Activated CD8-positive, alpha-beta memory T cell treated with anti-CD3 and anti-CD28 coated beads, Interleukin-2, amount 10 ng/mL, durations not matched to agents 7 days and 5 days (primary cell): ENCODE measurements at regions of chr19 and their contacts with region 1.

Region 1: DNA sequence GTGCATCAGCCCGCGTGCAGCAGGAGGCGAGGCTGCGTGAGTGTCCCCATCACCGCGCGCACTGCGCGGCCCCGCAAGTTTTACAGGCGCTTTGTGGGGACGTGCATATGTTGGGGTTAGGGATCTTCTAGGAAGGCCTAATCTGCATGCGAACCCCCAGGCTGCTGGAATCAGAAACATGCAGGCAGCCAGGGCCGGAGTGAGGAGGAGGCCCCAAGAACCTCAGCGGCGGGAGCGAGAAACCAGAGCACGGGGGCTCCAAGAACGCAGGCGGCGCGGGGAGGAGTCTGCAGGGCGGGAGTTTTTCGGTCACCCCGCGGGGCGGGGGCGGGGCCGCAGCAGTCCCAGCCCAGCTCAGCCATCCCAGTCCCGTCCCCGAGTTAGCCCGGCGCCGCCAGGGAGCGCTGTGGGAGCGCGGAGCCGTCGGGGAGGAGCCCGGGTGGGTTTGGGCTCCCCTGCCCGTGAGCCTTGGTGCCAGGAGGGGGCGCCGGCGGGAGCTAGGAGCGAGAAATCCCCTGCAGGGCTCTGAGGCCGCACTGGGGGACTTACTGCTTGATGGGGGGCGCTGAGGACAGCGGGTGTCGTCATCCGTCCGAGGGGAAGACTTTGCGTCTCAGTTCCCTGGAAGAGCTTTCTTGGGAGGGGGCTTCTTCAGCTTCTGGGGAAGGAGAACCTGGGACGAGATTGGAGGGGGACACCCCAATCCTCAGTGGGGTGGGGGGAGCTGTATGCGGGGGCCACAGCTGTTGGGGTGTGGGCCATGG is 933 bp upstream of the NRTN start:
- DNase-seq: peak; percentile 94
- ATAC-seq: peak; percentile 97
- H3K4me3 Mint-ChIP-seq: peak overlapping the region; percentile 64
- H3K27ac Mint-ChIP-seq: no peak overlapping the region
- H3K4me1 Mint-ChIP-seq: peaks cover 19% of the 10 kb centered on the region
- H3K27me3 Mint-ChIP-seq: peaks cover 46% of the 10 kb centered on the region

Region 2: GRCh38 chr19:5719961-5720790 is 83.8 kb before region 1 on chr19 and contains the starts of genes CATSPERD and LONP1:
- CTCF ChIA-PET with region 1: interaction called, 20 read pairs
- DNase-seq: peak; percentile 99
- ATAC-seq: peak; percentile 88
- H3K4me3 Mint-ChIP-seq: peak within 1 kb of the TSS; percentile 92
- H3K27ac Mint-ChIP-seq: peak within 1 kb of the TSS; percentile 98
- H3K4me1 Mint-ChIP-seq: peaks cover 37% of the 10 kb centered on the region
- H3K27me3 Mint-ChIP-seq: no peaks in the 10 kb centered on the region
- total RNA-seq, gene CATSPERD: not detected
- total RNA-seq, gene LONP1: 134 to 141 TPM

Region 3: GRCh38 chr19:5827891-5828660 is 24.1 kb after region 1 on chr19:
- CTCF ChIA-PET with region 1: interaction called, 49 read pairs
- DNase-seq: peak; percentile 97
- ATAC-seq: peak; percentile 83
- H3K4me3 Mint-ChIP-seq: peak overlapping the region; percentile 94
- H3K27ac Mint-ChIP-seq: peak overlapping the region; percentile 97
- H3K4me1 Mint-ChIP-seq: peaks cover 11% of the 10 kb centered on the region
- H3K27me3 Mint-ChIP-seq: no peaks in the 10 kb centered on the region

Region 4: GRCh38 chr19:5870986-5871394 is 67.1 kb after region 1 on chr19:
- CTCF ChIA-PET with region 1: no interaction called
- DNase-seq: no peak
- ATAC-seq: no peak
- H3K4me3 Mint-ChIP-seq: no peak overlapping the region
- H3K27ac Mint-ChIP-seq: no peak overlapping the region
- H3K4me1 Mint-ChIP-seq: no peaks in the 10 kb centered on the region
- H3K27me3 Mint-ChIP-seq: no peaks in the 10 kb centered on the region

Region 5: GRCh38 chr19:5904352-5905113 is 100.6 kb after region 1 on chr19 and contains the start of gene VMAC:
- CTCF ChIA-PET with region 1: interaction called, 50 read pairs
- DNase-seq: peak; percentile 100
- ATAC-seq: peak; percentile 87
- H3K4me3 Mint-ChIP-seq: peak within 1 kb of the TSS; percentile 99
- H3K27ac Mint-ChIP-seq: peak within 1 kb of the TSS; percentile 99
- H3K4me1 Mint-ChIP-seq: peaks cover 33% of the 10 kb centered on the region
- H3K27me3 Mint-ChIP-seq: no peaks in the 10 kb centered on the region
- total RNA-seq, gene VMAC: 5.1 to 7.0 TPM

Region 6: DNA sequence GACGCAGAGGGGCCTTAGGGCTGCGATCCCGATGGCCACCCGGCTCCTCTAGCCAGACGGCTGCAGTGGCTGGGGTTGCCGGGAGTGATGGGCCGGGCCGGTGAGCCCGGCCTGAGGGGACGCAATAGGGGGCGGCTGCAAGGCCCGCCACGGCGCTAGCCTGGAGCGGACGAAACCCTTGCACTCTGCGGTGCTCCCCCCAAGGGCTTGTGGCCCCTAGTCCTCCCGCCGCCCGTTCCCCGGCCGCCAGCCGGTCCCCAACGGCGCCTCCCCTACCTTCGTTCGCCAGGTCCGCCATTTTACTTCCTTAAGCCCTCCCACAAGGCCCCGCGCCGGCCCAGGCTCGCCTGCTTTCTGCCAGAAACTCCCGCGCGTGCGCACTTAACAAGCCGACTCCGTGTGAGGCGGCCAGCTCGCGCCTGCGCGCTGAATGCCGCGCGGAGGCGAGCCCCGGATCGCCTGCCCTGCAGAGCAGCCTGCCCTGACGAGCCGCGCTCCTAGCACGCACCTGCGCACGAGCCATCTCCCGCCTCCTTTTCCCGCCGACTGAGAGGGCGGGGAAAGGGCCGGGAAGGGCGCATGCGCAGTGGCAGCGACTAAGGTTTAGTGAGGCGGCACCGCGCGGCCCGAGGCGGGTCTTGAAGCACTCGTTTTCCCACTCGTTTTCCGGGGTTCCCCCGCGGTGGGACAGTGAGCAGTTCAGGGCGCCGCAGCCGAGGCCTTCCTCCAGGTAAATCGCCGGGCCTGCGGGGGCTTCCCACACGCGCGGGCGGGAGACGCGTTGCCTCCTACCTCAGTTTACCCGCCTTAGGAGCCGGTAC is 174.1 kb after region 1 on chr19 and contains the start of gene RANBP3:
- CTCF ChIA-PET with region 1: interaction called, 22 read pairs
- DNase-seq: peak; percentile 99
- ATAC-seq: peak; percentile 95
- H3K4me3 Mint-ChIP-seq: peak within 1 kb of the TSS; percentile 90
- H3K27ac Mint-ChIP-seq: peak within 1 kb of the TSS; percentile 90
- H3K4me1 Mint-ChIP-seq: peaks cover 68% of the 10 kb centered on the region
- H3K27me3 Mint-ChIP-seq: no peaks in the 10 kb centered on the region
- total RNA-seq, gene RANBP3: 97.8 to 108 TPM

Region 7: GRCh38 chr19:6021878-6022569 is 218.1 kb after region 1 on chr19:
- CTCF ChIA-PET with region 1: interaction called, 46 read pairs
- DNase-seq: peak; percentile 85
- ATAC-seq: peak; percentile 83
- H3K4me3 Mint-ChIP-seq: no peak overlapping the region
- H3K27ac Mint-ChIP-seq: no peak overlapping the region
- H3K4me1 Mint-ChIP-seq: peaks cover 1% of the 10 kb centered on the region
- H3K27me3 Mint-ChIP-seq: no peaks in the 10 kb centered on the region